Activated T-helper 1 cell treated with anti-CD3 and anti-CD28 coated beads, Interleukin-12 subunit alpha, Interleukin-12 subunit beta, Interleukin-2, Interleukin-4 antibody, amounts not matched to agents 30 ng/mL and 10 ng/mL and 1 ng/mL, durations not matched to agents 14 hours and 24 hours and 36 hours (primary cell): ENCODE measurements at regions of chr12 and their contacts with region 1.

Region 1: DNA sequence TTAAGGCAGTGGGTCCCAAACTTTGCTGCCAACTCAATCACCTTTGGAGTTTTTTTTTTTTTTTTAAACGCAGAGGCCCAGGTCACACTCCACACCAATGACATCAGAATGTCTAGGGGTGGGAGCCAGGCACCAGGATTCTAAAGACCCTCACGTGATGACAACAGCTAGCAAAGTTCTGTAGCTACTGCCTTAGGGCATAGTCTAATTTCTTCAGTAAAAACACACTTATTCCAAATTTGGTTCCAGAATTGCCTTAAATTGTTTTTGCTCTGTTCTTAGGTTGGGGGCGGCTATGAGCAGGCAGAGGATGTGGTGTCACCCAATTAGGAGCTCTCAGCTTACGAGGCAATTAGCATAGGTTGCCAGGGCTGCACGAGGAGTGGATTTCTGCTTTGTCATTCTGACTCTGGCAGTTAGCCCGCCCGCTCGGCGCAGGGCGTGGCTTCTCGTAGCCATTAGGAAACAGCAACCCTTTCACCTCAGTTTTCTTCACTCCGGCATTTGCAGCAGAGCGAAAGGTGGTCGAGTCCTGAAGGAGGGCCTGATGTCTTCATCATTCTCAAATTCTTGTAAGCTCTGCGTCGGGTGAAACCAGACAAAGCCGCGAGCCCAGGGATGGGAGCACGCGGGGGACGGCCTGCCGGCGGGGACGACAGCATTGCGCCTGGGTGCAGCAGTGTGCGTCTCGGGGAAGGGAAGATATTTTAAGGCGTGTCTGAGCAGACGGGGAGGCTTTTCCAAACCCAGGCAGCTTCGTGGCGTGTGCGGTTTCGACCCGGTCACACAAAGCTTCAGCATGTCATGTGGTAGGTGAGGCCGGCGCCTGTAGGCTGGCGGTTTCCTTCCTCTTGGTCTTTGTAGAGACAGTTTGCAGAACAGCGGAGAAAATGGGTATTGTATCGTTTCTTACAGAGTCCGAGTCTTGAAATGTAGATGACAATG is 16.7 kb upstream of the EID3 start:
- DNase-seq: peak; percentile 90
- H3K4me3 Mint-ChIP-seq: peak overlapping the region; percentile 98
- H3K27ac Mint-ChIP-seq: peak overlapping the region; percentile 99
- H3K4me1 Mint-ChIP-seq: peaks cover 27% of the 10 kb centered on the region
- H3K27me3 Mint-ChIP-seq: no peaks in the 10 kb centered on the region

Region 2: DNA sequence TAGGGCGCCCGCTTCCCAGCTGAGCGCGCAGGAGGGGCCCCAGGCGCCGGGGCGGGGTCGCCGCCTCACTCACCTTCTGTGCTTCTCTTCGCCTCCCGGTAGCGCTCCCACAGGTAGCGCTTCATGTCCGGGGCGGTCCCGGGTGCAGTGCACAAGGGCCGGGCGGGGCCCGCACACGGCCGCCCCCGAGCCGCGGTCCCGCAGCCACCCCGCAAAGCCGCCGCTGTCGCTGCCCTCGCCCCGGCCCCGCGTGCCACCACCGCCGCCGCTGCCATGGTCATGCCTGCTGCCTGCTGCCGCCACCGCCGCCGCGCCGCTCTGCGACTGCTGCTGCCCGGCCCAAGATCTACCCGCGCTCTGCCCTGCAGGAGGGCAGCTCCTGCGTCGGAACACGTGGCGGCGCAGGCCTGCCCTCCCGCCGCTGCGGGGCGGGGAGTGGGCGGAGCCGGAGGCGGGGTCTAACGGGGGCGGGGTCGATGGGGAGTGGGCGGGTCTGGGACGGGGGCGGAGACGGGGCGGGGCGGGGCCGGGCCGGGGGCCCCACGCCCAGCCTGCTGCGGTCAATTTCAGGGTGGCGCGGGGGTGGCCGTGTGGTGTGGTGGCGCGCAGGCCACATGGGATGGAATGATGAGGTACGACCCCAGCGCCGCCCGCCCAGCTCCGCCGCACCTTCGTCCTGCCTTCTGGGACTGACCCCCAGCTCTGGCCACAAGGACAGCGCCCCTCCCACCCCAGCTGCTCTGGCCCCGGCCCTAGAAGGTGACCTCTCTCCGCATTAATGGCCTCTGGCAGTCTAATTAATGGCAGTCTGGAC is 445.7 kb before region 1 on chr12 and contains the start of gene NT5DC3:
- intact Hi-C with region 1: loop called (anchors 1 kb)
- DNase-seq: peak; percentile 75
- H3K4me3 Mint-ChIP-seq: peak within 1 kb of the TSS; percentile 90
- H3K27ac Mint-ChIP-seq: peak within 1 kb of the TSS; percentile 83
- H3K4me1 Mint-ChIP-seq: peaks cover 24% of the 10 kb centered on the region
- H3K27me3 Mint-ChIP-seq: peaks cover 24% of the 10 kb centered on the region
- total RNA-seq, gene NT5DC3: 13.2 and 14.2 TPM in 2 replicates

Region 3: DNA sequence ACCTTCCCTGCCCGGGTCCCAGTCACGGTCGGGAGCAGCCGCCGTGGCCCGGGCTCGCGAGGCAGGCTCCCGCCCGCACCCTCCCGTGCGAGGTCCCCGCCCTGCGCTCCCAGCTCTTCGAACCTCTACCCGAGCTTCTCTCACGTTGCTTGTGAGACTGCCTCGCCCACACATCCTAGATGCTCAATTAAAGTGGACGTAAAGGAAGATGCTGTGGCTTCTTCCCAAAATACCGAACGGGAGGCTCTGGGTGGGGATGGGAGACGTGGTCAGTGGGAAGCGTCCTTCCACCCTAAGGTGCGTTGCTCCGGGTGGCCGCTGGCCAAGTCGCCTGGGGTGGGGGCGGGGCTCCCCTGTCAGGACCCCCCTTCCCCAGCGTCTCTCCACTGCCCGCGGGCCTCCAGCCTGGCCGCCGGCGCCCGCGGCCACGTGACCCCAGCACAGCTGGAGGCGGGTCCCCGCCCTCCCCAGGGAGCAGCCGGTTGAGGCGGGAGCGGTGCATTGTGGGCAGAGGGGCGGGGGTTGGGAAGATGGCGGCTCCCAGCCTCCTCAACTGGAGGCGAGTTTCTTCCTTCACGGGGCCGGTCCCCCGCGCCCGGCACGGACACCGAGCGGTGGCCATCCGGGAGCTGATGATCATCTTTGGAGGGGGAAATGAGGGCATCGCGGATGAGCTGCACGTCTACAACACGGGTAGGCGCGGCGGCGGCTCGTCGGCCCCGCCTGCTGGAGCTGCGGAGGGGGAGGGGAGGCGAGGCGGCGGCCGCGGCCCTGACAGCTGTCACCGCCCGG is 222.6 kb before region 1 on chr12 and contains the start of gene HCFC2:
- intact Hi-C with region 1: loop called (anchors 2 kb)
- DNase-seq: peak; percentile 88
- H3K4me3 Mint-ChIP-seq: peak within 1 kb of the TSS; percentile 95
- H3K27ac Mint-ChIP-seq: peak within 1 kb of the TSS; percentile 86
- H3K4me1 Mint-ChIP-seq: peaks cover 36% of the 10 kb centered on the region
- H3K27me3 Mint-ChIP-seq: peaks cover 24% of the 10 kb centered on the region
- total RNA-seq, gene HCFC2: 8.5 and 8.9 TPM in 2 replicates

Region 4: DNA sequence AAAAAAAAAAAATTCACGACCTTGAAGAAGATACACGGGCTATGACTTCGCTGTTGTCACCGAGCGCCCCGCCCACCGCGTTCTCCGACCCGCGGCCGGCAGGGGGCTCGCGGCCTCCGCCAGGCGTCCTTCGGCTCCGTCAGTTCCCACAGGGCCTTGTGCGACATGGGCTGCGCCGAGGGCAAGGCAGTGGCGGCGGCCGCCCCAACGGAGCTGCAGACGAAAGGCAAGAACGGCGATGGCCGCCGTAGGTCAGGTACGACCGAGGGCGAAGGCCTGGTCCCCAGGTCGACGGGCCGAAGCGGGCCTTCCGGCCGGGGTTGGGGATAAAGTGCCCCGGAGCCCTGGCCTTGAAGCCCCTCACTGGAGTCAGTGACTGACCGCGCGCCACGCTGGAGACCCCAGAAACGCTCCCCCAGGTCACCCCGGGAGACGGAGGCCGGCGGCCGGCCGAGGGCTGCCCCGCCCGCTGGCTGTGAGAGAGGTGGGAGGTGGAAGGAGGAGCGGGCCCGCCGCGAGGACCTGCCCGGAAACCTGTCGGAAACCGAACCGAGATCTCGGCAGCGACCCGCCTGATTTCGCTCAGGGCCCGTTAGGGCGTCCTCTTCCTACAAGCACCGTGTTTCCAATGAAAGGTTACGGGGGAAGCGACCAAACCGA is 71.0 kb before region 1 on chr12 and contains the start of gene TXNRD1:
- intact Hi-C with region 1: loop called (anchors 1 kb)
- DNase-seq: peak; percentile 79
- H3K4me3 Mint-ChIP-seq: peak within 1 kb of the TSS; percentile 82
- H3K27ac Mint-ChIP-seq: peak within 1 kb of the TSS; percentile 55
- H3K4me1 Mint-ChIP-seq: peaks cover 44% of the 10 kb centered on the region
- H3K27me3 Mint-ChIP-seq: peaks cover 6% of the 10 kb centered on the region
- total RNA-seq, gene TXNRD1: 93.3 and 103 TPM in 2 replicates

Region 5: GRCh38 chr12:104334581-104334980 is 47.8 kb after region 1 on chr12:
- intact Hi-C with region 1: no loop called
- DNase-seq: no peak
- H3K4me3 Mint-ChIP-seq: no peak overlapping the region
- H3K27ac Mint-ChIP-seq: no peak overlapping the region
- H3K4me1 Mint-ChIP-seq: no peaks in the 10 kb centered on the region
- H3K27me3 Mint-ChIP-seq: no peaks in the 10 kb centered on the region

Region 6: DNA sequence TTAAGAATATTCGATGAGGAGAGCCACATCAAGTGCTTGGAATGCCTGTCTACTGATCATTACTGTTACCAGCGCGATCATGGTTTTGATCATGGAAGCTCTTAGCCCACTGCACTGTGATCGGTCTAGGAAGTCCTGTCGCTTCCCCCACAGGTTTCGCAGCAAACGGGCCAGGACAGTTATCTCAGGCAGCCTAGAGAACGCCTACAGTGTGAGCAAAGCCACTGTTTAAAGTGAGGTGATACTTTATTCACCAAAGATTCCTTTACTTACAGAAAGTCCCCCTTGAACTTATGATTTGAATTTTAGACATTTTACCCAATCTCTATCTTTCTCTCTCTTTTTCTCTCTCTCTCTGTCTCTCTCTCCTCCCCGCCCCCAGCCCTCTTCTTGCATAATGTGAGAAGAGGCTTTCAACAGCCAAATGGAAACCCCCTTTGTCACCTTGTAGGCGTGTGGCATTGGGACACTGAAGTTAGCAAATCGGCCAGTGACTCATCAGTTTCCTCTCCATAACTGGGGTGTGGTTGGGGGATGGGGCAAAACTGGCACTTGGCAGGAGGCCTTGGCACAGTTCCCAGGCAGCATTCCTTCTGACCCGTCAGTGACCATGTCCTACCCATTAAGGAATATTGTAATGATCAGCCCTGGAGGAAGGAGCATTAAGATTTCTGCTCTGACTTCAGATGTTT is 384.7 kb after region 1 on chr12:
- intact Hi-C with region 1: loop called (anchors 2 kb)
- DNase-seq: peak; percentile 82
- H3K4me3 Mint-ChIP-seq: peak overlapping the region; percentile 50
- H3K27ac Mint-ChIP-seq: peak overlapping the region; percentile 91
- H3K4me1 Mint-ChIP-seq: peaks cover 82% of the 10 kb centered on the region
- H3K27me3 Mint-ChIP-seq: no peaks in the 10 kb centered on the region

Region 7: GRCh38 chr12:105226219-105226618 is 939.4 kb after region 1 on chr12:
- intact Hi-C with region 1: loop called (anchors 5 kb)
- DNase-seq: peak; percentile 24
- H3K4me3 Mint-ChIP-seq: peak overlapping the region; percentile 43
- H3K27ac Mint-ChIP-seq: no peak overlapping the region
- H3K4me1 Mint-ChIP-seq: peaks cover 71% of the 10 kb centered on the region
- H3K27me3 Mint-ChIP-seq: no peaks in the 10 kb centered on the region